ENCODE measurements at regions of chr1 and their contacts with region 1.

Region 1: DNA sequence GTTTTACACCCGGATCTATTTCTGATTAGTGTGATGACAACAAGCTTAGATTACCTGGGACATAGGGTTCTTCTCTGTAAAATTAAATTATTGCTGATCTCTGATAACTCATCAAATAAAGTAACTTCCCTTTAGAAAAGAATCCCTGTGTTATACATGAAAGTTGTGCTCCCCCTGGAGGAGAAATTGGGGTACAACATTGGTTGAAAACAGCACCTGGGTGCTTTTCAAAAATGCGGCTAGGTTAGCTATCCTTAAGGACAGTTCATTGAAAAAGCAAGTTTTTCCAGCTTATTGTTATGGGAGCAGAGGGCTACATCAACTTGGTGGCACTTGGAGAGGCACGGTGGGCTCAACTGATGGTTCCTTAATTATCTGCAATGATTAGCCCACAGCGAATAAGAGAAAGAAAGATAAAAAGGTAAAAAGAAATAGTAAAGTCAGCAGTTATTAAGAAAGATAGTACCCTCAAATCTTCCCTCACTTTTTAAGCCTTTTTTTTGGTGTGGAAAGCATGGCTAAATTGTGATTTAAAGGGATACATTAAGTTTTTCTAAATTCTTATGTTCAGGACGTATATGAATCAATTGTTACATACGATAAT is 97.8 kb downstream of the FMN2 start:
- DNase-seq: peak; percentile 84
- ATAC-seq: peak; percentile 34
- H3K4me3 ChIP-seq: no peak overlapping the region
- H3K27ac ChIP-seq: no peak overlapping the region
- H3K4me1 ChIP-seq: peaks cover 8% of the 10 kb centered on the region; the same call in 1 of the 2 replicates
- H3K27me3 ChIP-seq: no peaks in the 10 kb centered on the region
- CTCF ChIP-seq: peak; percentile 96

Region 2: DNA sequence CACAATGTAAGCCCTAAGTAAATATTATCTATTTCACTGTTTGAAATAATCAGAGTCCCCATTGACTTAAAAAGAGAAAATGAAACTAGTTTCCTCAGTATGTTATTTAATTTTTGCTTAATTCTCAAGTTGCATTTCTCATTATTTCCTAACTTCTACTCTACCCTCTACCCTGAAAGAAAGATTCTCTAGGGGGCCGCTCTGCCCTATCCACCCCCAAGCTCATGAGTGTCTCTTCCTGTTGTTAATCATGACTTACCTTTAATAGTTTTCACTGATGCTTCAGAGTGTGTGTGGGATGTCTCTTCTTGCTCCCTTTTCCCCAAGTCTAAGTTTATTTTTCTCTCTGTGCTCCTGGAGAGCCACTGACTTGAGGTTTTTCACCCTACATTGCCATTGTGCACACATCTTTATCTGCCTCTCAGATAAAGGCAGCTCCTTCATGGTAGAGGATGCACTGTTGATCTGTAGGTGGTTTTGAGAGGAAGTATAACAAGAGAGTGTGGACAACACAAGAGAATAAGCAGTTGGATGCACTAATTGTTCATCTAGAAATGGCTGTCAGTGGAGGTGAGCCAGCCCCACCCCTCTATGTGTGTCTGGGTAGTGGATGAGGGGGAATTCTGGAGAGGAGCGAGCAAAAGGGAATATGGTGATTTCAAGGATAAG is 541.4 kb before region 1 on chr1:
- CTCF ChIA-PET with region 1: no interaction called
- POLR2A ChIA-PET with region 1: no interaction called
- intact Hi-C with region 1: no loop called
- DNase-seq: no peak
- ATAC-seq: no peak
- H3K4me3 ChIP-seq: no peak overlapping the region
- H3K27ac ChIP-seq: no peak overlapping the region
- H3K4me1 ChIP-seq: no peaks in the 10 kb centered on the region
- H3K27me3 ChIP-seq: no peaks in the 10 kb centered on the region
- CTCF ChIP-seq: no peak

Region 3: DNA sequence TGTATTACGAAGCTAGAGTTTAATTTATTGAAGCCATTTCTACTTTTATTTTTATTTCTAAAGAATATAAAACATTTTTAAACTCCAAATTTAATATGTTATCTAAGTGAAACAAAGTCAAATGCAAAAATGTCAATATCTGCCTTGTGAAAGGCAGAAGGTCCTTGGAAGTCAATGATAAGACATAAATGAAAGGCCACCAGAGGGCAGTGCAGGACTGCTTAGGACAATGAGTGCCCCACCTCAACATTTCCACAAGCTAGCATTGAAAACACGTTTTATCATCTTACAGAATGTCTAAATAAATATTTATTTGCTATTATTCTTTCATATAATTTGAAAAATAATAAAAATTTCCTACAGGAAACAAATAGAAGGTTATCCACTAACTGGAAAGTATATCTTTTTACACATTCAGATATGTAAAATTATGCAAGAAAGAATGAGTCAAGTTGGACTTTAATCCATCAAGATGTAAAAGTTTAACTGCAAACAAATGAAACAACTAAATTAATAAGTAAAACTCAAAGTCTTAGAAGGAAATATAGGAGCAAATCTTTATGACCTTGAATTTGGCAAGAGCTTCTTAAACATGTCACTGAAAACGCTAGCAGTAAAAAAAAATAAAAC is 237.9 kb before region 1 on chr1:
- CTCF ChIA-PET with region 1: no interaction called
- POLR2A ChIA-PET with region 1: no interaction called
- intact Hi-C with region 1: loop called (anchors 1 kb)
- DNase-seq: peak; percentile 90
- ATAC-seq: peak; percentile 67
- H3K4me3 ChIP-seq: no peak overlapping the region
- H3K27ac ChIP-seq: no peak overlapping the region
- H3K4me1 ChIP-seq: peaks cover 6% of the 10 kb centered on the region; the same call in 1 of the 2 replicates
- H3K27me3 ChIP-seq: no peaks in the 10 kb centered on the region
- CTCF ChIP-seq: peak; percentile 73

Region 4: GRCh38 chr1:240234485-240235210 is 45.2 kb after region 1 on chr1:
- CTCF ChIA-PET with region 1: no interaction called
- POLR2A ChIA-PET with region 1: no interaction called
- intact Hi-C with region 1: loop called (anchors 1 kb)
- DNase-seq: peak; percentile 73
- ATAC-seq: peak; percentile 50
- H3K4me3 ChIP-seq: no peak overlapping the region
- H3K27ac ChIP-seq: peak overlapping the region; percentile 77
- H3K4me1 ChIP-seq: peaks cover 44% of the 10 kb centered on the region
- H3K27me3 ChIP-seq: no peaks in the 10 kb centered on the region
- CTCF ChIP-seq: no peak

Region 5: DNA sequence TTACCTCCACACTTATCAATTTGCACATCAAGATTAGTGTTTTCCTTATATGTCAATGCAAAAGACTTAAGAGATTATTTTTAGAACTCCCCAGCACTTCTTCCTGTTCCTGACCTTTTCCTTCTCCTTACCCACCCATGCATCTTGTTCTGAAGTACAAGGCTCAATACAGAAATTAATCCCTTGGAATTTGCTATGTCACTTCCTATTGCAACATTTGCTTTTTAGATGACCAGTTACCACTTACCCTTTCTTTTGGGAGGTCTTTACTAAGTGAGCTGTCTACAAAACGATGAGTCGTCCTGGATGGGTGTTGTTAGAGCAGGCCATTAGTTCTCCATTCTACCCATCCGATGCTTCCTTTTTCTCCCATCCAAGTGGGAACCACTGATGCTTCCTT is 123.4 kb after region 1 on chr1:
- CTCF ChIA-PET with region 1: no interaction called
- POLR2A ChIA-PET with region 1: no interaction called
- intact Hi-C with region 1: loop called (anchors 5 kb)
- DNase-seq: peak; percentile 80
- ATAC-seq: peak; percentile 35; the same call in 1 of the 2 replicates
- H3K4me3 ChIP-seq: no peak overlapping the region
- H3K27ac ChIP-seq: peak overlapping the region; percentile 36
- H3K4me1 ChIP-seq: peaks cover 33% of the 10 kb centered on the region
- H3K27me3 ChIP-seq: no peaks in the 10 kb centered on the region
- CTCF ChIP-seq: no peak

Region 6: DNA sequence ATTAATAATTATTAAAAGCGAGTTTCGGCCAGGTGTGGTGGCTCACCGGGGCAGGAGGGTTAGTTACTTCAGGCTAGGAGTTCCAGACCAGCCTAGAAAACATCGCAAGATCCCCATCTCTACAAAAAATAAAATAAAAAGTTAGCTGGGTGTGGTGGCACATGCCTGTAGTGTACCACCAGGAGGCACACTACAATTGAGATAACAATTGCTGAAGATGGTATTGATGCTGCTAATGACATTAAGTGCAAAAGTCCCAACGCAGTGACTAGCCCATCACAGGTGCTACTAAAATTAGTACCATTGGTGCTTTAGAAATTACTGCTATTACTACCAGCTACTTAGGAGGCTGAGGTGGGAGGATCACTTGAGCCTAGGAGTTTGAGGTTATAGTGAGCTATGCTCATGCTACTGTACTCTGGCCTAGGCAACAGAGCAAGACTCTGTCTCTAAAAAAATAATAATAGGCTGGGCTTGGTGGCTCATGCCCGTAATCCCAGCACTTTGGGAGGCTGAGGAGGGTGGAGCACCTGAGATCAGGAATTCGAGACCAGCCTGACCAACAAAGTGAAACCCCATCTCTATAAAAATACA is 265.8 kb after region 1 on chr1:
- CTCF ChIA-PET with region 1: no interaction called
- POLR2A ChIA-PET with region 1: no interaction called
- intact Hi-C with region 1: loop called (anchors 5 kb)
- DNase-seq: peak; percentile 54
- ATAC-seq: peak; percentile 77
- H3K4me3 ChIP-seq: no peak overlapping the region
- H3K27ac ChIP-seq: no peak overlapping the region
- H3K4me1 ChIP-seq: no peaks in the 10 kb centered on the region
- H3K27me3 ChIP-seq: no peaks in the 10 kb centered on the region
- CTCF ChIP-seq: peak; percentile 82

Region 7: DNA sequence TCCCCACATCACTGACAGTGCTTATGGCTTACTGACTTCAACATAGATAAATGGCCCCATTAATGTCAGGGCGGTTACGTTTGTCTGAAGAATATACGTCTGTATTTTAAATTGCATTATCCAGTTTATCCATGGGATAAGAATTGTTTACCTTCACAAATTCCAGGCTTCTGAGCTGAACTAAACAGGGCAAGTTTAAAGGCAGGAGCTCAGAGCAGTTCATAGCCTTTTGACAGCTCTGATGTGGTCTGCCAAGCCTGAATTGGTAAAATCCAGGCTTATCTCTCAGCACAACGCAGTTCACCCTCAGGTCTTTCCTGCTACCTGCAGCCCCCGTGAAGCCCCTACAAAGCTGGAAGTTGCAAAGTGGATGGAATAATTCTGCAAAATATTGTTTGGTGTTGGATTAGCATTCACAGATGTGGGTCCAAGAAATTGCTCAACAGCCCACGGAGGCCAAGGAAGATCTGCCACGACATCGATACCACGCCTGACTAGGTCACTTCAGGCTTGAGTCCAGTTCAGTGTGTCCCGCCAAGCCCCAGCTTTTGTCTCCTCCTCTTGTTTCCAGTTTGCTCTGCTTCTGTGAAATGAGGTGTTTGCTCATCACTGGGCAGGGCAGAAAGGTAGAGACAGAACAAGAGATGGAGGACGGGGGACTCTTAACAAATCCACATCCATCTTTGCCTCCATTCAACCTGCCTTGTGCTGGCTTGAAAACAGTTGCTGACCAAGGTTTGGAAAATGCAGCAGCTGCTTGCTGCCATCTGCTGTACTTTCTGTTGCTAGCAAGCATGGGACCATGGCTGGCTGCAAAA is 502.2 kb after region 1 on chr1:
- CTCF ChIA-PET with region 1: no interaction called
- POLR2A ChIA-PET with region 1: no interaction called
- intact Hi-C with region 1: loop called (anchors 1 kb)
- DNase-seq: peak; percentile 78
- ATAC-seq: peak; percentile 89
- H3K4me3 ChIP-seq: 0 out of 2 replicates have a peak overlapping the region, but pooled peaks have one; percentile 5
- H3K27ac ChIP-seq: no peak overlapping the region
- H3K4me1 ChIP-seq: peaks cover 16% of the 10 kb centered on the region; the same call in 1 of the 2 replicates
- H3K27me3 ChIP-seq: peaks cover 46% of the 10 kb centered on the region
- CTCF ChIP-seq: peak; percentile 92